Dendritic cell treated with granulocyte-macrophage colony-stimulating factor and Interleukin-4, amounts not matched to agents 40 ng/mL and 50 ng/mL, for 4 days (primary cell): ENCODE measurements at regions of chrX and their contacts with region 1.

Region 1: GRCh38 chrX:107894038-107894437 is 68.4 kb downstream of the MID2 start:
- H3K4me3 Mint-ChIP-seq: no peak overlapping the region
- H3K27ac Mint-ChIP-seq: no peak overlapping the region
- H3K4me1 Mint-ChIP-seq: no peaks in the 10 kb centered on the region
- H3K27me3 Mint-ChIP-seq: peaks cover 7% of the 10 kb centered on the region

Region 2: DNA sequence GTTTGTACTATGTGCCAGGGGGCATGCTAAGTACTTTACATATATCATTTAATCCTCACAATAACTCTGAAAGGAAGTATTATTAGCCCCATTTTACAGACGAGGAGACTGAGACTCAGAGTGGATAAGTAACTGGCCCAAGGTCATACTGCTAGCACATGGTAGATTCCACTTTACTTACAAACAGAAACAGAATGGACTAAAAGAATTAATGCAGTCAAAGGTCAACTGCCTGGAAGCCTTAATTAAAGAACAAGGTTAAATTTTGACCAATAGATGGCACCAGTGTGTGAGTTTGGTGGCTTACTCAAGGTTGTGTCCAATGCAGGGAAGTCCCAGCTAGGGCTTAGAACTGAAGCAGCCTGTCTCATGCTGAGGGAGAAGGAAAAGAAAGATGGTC is 995.6 kb before region 1 on chrX:
- intact Hi-C with region 1: loop called (anchors 2 kb)
- H3K4me3 Mint-ChIP-seq: no peak overlapping the region
- H3K27ac Mint-ChIP-seq: no peak overlapping the region
- H3K4me1 Mint-ChIP-seq: no peaks in the 10 kb centered on the region
- H3K27me3 Mint-ChIP-seq: peaks cover 3% of the 10 kb centered on the region

Region 3: DNA sequence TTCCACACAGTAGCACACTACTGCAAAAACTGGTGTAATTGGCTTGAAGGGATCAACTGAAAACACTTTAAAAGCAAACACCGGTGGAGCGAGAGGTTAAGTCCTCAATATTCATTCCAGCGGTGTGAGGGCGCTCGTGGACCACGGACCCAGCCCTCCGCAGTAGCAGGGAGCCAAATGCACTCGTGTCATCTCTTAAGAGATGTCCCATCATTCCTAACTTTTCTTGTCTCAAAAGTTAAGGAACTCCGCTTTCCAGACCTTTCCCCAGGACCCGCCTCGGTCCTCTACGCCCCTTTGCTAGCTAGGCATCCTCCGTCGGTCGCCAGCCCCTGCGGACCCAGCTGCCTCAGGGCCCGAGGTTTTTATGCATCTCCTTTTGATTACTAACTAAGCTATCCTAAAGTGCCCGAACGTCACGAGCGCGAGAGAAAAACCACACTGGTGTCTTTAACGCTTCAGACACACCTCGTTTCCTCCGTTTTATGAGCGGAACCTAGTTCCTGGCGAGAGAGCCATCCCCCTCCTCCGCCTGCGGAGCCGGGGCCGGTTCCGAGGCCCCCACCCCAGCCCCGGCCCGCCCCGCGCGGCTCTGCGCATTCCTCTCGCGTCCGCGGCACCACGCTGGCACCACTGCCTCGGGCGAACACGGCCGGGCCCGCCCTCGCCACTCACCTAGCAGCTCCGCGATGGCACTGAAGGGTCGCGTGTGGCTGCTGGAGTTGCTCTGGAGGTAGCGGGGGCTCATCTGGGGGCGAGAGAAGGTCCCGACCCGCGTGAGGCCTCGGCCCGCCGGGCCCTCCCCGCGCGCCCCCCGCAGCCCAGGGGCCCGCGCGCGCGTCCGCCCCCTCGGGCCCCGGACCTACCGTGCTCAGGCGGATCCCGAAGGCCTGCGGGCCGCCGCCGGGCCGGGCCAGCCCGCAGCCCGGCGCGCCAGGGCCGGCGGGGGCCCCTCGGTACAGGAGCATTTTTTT is 894.7 kb before region 1 on chrX:
- intact Hi-C with region 1: no loop called
- H3K4me3 Mint-ChIP-seq: peak overlapping the region; percentile 64
- H3K27ac Mint-ChIP-seq: no peak overlapping the region
- H3K4me1 Mint-ChIP-seq: peaks cover 8% of the 10 kb centered on the region
- H3K27me3 Mint-ChIP-seq: peaks cover 30% of the 10 kb centered on the region

Region 4: DNA sequence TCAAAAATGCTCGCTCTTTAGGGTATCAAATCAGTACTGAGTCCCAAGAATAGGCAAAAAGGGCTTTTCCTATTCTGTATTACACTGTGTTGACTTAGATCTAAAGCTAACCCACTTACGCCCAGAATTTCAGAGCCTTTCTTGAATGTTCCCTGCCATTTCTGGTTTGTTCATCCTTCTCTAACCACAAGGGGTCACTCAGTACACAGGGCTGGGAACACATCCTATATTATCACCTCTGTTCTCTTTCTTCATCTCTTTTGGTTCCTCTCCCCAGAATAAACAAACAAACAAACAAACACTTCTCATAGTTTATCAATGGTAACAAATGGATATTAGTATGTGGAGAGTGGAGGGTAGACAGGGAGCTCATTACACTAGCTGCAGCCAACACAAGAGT is 868.5 kb before region 1 on chrX:
- intact Hi-C with region 1: loop called (anchors 10 kb)
- H3K4me3 Mint-ChIP-seq: no peak overlapping the region
- H3K27ac Mint-ChIP-seq: no peak overlapping the region
- H3K4me1 Mint-ChIP-seq: no peaks in the 10 kb centered on the region
- H3K27me3 Mint-ChIP-seq: no peaks in the 10 kb centered on the region

Region 5: DNA sequence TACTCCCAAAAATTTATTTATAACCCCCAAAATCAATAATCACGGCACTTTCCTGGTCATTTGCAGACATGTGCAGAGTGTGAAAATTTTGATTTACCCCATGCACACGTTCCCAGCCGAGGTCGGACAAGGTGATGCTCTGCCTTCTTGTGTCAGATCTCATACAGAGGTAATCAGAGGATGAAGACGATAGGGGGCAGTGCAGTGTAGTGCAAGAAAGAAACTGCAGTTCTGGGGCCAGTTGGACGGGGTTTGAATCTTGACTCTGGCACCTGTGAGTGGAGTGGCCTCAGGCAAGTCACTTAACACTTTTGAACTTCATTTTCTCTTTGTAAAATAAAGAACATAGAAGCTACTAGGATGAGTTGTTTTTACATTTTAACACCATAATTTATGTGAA is 356.2 kb before region 1 on chrX:
- intact Hi-C with region 1: loop called (anchors 5 kb)
- H3K4me3 Mint-ChIP-seq: no peak overlapping the region
- H3K27ac Mint-ChIP-seq: no peak overlapping the region
- H3K4me1 Mint-ChIP-seq: no peaks in the 10 kb centered on the region
- H3K27me3 Mint-ChIP-seq: no peaks in the 10 kb centered on the region

Region 6: DNA sequence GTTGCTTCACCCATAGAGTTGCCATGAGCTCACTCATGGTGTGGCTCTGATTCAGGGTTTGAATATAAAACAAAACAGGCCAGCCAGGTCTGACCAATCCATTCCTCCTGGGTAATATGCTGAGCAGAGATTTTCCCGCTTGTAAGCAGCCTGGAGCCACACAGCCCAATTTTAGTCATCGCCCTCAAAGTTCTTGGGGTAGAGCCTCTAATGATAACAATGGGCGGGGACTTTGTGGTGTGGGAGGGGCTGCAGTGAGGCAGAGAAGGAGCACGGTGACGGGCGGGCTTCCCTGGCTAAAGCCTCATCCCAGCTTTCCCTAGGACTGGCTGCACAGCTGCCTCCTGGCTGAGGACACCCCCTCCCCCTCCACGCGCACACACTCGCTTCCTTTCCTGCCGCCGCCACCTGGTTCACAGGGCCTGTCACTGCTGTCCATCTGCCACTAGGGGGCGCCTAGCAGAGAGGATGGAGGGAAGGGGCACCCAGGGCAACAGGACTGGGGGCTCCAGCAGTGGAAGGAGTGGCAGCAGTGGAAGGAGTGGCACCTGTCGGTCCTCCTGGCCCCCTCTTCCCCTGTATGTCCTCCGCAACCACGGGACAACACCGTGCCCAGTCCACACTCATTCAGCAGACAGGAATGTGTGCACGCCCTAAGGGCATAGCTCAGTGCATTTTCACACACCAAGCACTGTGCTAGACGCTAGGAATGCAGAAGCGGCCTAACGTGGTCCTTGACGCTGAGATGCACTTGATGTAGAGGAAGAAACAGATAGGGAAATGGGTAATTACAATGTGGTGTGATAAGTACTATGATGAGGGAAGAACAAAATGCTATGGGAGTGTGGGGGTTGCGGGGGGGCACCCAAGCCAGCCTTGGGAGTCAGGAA is 238.9 kb before region 1 on chrX:
- intact Hi-C with region 1: loop called (anchors 10 kb)
- H3K4me3 Mint-ChIP-seq: no peak overlapping the region
- H3K27ac Mint-ChIP-seq: no peak overlapping the region
- H3K4me1 Mint-ChIP-seq: peaks cover 15% of the 10 kb centered on the region
- H3K27me3 Mint-ChIP-seq: no peaks in the 10 kb centered on the region

Region 7: DNA sequence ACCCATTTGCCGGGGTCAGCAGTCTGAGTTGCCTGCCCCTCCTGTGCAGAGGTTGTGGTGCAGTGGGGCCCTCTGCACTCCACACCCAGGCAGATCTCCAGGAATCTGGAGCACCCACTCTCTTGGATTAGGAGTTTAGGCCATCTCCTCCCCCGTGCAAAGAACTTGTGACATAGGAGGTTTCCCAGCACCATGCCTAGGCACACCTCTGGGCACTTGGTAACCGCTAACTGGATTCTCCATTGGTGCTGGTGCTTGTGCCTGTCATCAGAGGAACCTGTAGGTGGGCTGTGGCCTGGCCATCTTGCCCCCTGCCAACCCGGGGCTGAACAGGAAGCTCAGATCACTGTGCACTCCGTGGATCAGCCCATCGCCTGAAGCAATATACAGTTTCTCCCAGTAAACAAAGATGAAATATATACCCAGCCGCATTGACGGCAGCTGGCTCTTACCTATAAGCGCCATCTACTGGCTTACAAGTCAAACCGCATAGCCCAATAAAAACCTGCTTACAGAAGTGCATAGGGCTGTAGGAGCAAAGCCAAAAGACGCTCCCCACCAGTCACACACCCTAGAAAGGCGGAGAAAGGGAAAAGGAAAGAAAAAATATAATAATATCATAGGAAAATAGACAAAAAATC is 107.3 kb after region 1 on chrX:
- intact Hi-C with region 1: no loop called
- H3K4me3 Mint-ChIP-seq: no peak overlapping the region
- H3K27ac Mint-ChIP-seq: no peak overlapping the region
- H3K4me1 Mint-ChIP-seq: no peaks in the 10 kb centered on the region
- H3K27me3 Mint-ChIP-seq: peaks cover 2% of the 10 kb centered on the region